ENCODE measurements at regions of chr1 and their contacts with region 1.

Region 1: GRCh38 chr1:90834886-90835660 is 118.0 kb upstream of the BARHL2 start:
- DNase-seq: no peak
- H3K4me3 Mint-ChIP-seq: no peak overlapping the region
- H3K27ac Mint-ChIP-seq: no peak overlapping the region
- H3K4me1 Mint-ChIP-seq: peaks cover 12% of the 10 kb centered on the region
- H3K27me3 Mint-ChIP-seq: peaks cover 82% of the 10 kb centered on the region

Region 2: GRCh38 chr1:90721210-90722194 is 113.6 kb before region 1 on chr1:
- intact Hi-C with region 1: loop called (anchors 2 kb)
- DNase-seq: peak; percentile 35
- H3K4me3 Mint-ChIP-seq: no peak overlapping the region
- H3K27ac Mint-ChIP-seq: peak overlapping the region; percentile 31
- H3K4me1 Mint-ChIP-seq: peaks cover 32% of the 10 kb centered on the region
- H3K27me3 Mint-ChIP-seq: peaks cover 85% of the 10 kb centered on the region

Measured in activated T-helper 1 cell treated with anti-CD3 and anti-CD28 coated beads, Interleukin-12 subunit alpha, Interleukin-12 subunit beta, Interleukin-2, Interleukin-4 antibody, amounts not matched to agents 30 ng/mL and 10 ng/mL and 1 ng/mL, durations not matched to agents 14 hours and 24 hours and 36 hours (primary cell).